ENCODE measurements at regions of chr9 and their contacts with region 1.

Region 1: GRCh38 chr9:129413537-129414376 is 207.1 kb downstream of the C9orf50 start:
- DNase-seq: peak; percentile 99 to 100 (median 99)
- ATAC-seq: peak; percentile 57 to 87 (median 86)
- H3K4me3 ChIP-seq: peak overlapping the region; percentile 28 to 71 (median 58)
- H3K27ac ChIP-seq: peak overlapping the region; percentile 94 to 100 (median 100)
- H3K4me1 ChIP-seq: peaks cover 4 to 56% (median 32%) of the 10 kb centered on the region in 12 donors
- H3K27me3 ChIP-seq: no peaks in the 10 kb centered on the region
- CTCF ChIP-seq: peak in 1 of 12 donors; percentile 13
- POLR2A ChIP-seq: peak; percentile 41 to 85

Region 2: GRCh38 chr9:129139993-129140396 is 273.8 kb before region 1 on chr9:
- intact Hi-C with region 1: loop called in 1 of 10 experiments (anchors 2 kb)
- DNase-seq: peak; percentile 92 to 98 (median 96)
- ATAC-seq: peak; percentile 76 to 81 (median 78)
- H3K4me3 ChIP-seq: peak overlapping the region in 11 of 12 donors; percentile 29 to 69 (median 57)
- H3K27ac ChIP-seq: peak overlapping the region; percentile 99 to 100 (median 100)
- H3K4me1 ChIP-seq: peaks cover 25 to 77% (median 71%) of the 10 kb centered on the region in 12 donors
- H3K27me3 ChIP-seq: no peaks in the 10 kb centered on the region
- CTCF ChIP-seq: no peak
- POLR2A ChIP-seq: peak in 1 of 2 donors; percentile 50

Region 3: GRCh38 chr9:129320575-129321263 is 93.0 kb before region 1 on chr9:
- intact Hi-C with region 1: loop called in 1 of 10 experiments (anchors 5 kb)
- DNase-seq: peak in 4 of 5 donors; percentile 72 to 77 (median 74)
- ATAC-seq: peak; percentile 70 to 86 (median 82)
- H3K4me3 ChIP-seq: peak overlapping the region in 11 of 12 donors; percentile 33 to 77 (median 55)
- H3K27ac ChIP-seq: peak overlapping the region; percentile 78 to 97 (median 92)
- H3K4me1 ChIP-seq: peaks cover 8 to 82% (median 61%) of the 10 kb centered on the region in 12 donors
- H3K27me3 ChIP-seq: no peaks in the 10 kb centered on the region
- CTCF ChIP-seq: peak in 7 of 12 donors; percentile 18 to 50 (median 27)
- POLR2A ChIP-seq: peak in 1 of 2 donors; percentile 83

Region 4: GRCh38 chr9:129451089-129452025 is 37.6 kb after region 1 on chr9:
- intact Hi-C with region 1: loop called in 3 of 10 experiments (anchors 5 kb)
- DNase-seq: peak in 3 of 5 donors; percentile 41 to 54 (median 52)
- ATAC-seq: peak in 3 of 4 donors; percentile 33 to 83 (median 59)
- H3K4me3 ChIP-seq: no peak overlapping the region
- H3K27ac ChIP-seq: peak overlapping the region; percentile 44 to 81 (median 67)
- H3K4me1 ChIP-seq: peaks cover 0 to 24% (median 12%) of the 10 kb centered on the region in 12 donors
- H3K27me3 ChIP-seq: no peaks in the 10 kb centered on the region
- CTCF ChIP-seq: no peak
- POLR2A ChIP-seq: no peak

Region 5: GRCh38 chr9:129482521-129483414 is 69.0 kb after region 1 on chr9:
- intact Hi-C with region 1: loop called in 8 of 10 experiments (anchors 1 to 10 kb)
- DNase-seq: peak; percentile 88 to 93 (median 88)
- ATAC-seq: peak in 3 of 4 donors; percentile 43 to 74 (median 74)
- H3K4me3 ChIP-seq: peak overlapping the region; percentile 41 to 77 (median 66)
- H3K27ac ChIP-seq: peak overlapping the region; percentile 97 to 100 (median 99)
- H3K4me1 ChIP-seq: peaks cover 11 to 84% (median 64%) of the 10 kb centered on the region in 12 donors
- H3K27me3 ChIP-seq: no peaks in the 10 kb centered on the region
- CTCF ChIP-seq: peak in 4 of 12 donors; percentile 11 to 33 (median 20)
- POLR2A ChIP-seq: peak in 1 of 2 donors; percentile 32

Region 6: GRCh38 chr9:129610473-129611301 is 196.9 kb after region 1 on chr9:
- intact Hi-C with region 1: loop called in 2 of 10 experiments (anchors 5 to 10 kb)
- DNase-seq: peak; percentile 82 to 92 (median 84)
- ATAC-seq: peak in 3 of 4 donors; percentile 12 to 66 (median 54)
- H3K4me3 ChIP-seq: peak overlapping the region; percentile 44 to 74 (median 66)
- H3K27ac ChIP-seq: peak overlapping the region; percentile 29 to 98 (median 90)
- H3K4me1 ChIP-seq: peaks cover 0 to 47% (median 39%) of the 10 kb centered on the region in 12 donors
- H3K27me3 ChIP-seq: no peaks in the 10 kb centered on the region
- CTCF ChIP-seq: peak; percentile 66 to 98 (median 91)
- POLR2A ChIP-seq: peak in 1 of 2 donors; percentile 41

Measured in heart left ventricle (tissue), 16 donors.